Esophagus squamous epithelium (tissue), 5 donors: ENCODE measurements at regions of chr12 and their contacts with region 1.

Region 1: DNA sequence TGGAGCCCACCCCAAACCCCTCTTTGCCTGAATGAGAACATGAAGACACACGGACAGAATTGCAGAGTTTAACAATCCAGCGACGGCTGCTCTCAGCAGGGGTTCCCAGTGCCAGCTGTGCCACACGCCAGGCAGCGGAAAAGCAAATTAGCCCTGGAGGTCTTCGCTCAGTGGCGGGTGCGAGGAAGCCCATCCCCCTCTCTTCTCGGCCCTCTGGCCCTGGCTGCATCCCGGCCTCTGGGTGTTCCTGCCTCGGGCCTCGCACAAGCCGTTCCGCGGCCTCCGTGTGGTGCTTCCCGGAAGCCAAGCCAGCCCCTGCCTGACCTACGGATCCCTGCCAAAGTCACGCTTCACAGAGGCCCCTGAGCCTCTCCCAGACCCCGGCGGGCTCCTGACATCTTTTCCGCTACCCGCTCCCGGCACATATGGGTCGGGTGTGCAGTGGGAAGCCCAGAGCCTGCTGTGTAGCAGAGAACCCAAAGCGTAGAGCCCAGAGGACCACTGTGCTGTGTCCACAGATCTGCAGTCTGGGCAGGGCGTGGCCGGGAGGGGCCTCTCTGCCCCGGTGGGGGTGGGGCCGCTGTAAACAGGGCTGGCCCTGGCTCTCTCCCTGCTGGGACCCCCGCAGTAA is 70.7 kb upstream of the GALNT9 start:
- DNase-seq: no peak
- H3K4me3 ChIP-seq: no peak overlapping the region
- H3K27ac ChIP-seq: no peak overlapping the region
- H3K4me1 ChIP-seq: no peaks in the 10 kb centered on the region
- H3K27me3 ChIP-seq: peaks cover 0 to 100% (median 21%) of the 10 kb centered on the region in 4 donors
- CTCF ChIP-seq: no peak
- POLR2A ChIP-seq: no peak

Region 2: DNA sequence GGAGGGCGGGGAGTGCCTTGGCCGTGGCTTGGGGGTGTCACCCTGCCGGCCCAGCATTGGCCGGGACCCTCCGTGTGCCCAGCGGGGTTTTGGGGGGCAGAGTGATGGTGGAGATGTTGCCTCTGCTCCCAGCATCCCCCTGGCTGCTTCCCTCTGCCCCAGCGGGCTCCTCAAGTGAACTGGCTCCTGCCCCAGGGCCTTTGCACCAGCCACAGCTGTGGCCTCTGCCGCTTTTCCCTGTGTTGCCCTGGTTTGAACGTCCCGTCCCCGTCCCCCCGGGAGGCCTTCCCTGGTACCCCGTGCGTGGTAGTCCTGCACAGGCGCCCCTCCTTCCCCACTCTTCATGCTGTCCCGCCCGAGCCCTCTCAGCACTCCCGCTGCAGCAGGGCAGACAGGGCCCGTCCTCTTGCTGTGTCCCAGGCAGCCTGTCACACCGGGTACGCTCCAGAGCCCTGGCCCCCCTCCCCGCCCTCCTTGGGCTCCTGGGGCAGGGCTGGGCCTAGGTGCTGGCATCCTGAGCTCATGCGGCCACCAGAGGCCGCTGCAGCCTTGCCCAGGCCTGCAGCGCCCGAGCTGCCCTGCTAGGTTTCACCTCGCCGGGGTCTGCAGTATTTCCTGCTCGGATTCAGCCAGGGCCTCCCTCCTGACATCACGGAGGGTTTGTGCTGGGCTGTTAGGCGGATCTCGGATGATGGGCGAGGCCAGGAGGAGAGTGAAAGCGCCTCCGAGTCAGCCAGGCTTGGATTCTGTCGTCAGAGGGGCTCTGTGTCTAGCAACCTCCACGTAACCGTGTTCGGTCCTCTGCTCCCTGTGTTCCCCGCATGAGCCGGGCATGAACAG is 246.4 kb before region 1 on chr12:
- intact Hi-C with region 1: loop called (anchors 10 kb)
- DNase-seq: no peak
- H3K4me3 ChIP-seq: peak overlapping the region in 3 of 4 donors; percentile 19 to 50 (median 27)
- H3K27ac ChIP-seq: no peak overlapping the region
- H3K4me1 ChIP-seq: peaks cover 6 to 9% (median 7%) of the 10 kb centered on the region in 3 donors
- H3K27me3 ChIP-seq: no peaks in the 10 kb centered on the region
- CTCF ChIP-seq: peak; percentile 79 to 92 (median 85)
- POLR2A ChIP-seq: no peak